CD8-positive, alpha-beta T cell (primary cell): ENCODE measurements at regions of chr2 and their contacts with region 1.

Region 1: GRCh38 chr2:158091647-158092046 is 10.0 kb upstream of the UPP2 start:
- DNase-seq: no peak
- ATAC-seq: no peak
- H3K4me3 ChIP-seq: no peak overlapping the region
- H3K4me3 Mint-ChIP-seq: no peak overlapping the region
- H3K27ac ChIP-seq: no peak overlapping the region
- H3K27ac Mint-ChIP-seq: no peak overlapping the region
- H3K4me1 ChIP-seq: no peaks in the 10 kb centered on the region
- H3K4me1 Mint-ChIP-seq: no peaks in the 10 kb centered on the region
- H3K27me3 ChIP-seq: no peaks in the 10 kb centered on the region
- H3K27me3 Mint-ChIP-seq: peaks cover 24% of the 10 kb centered on the region
- CTCF ChIP-seq: no peak

Region 2: GRCh38 chr2:158129037-158129436 is 37.4 kb after region 1 on chr2:
- CTCF ChIA-PET with region 1: no interaction called
- POLR2A ChIA-PET with region 1: no interaction called
- intact Hi-C with region 1: loop called in 1 of 2 experiments (anchors 1 kb)
- DNase-seq: no peak
- ATAC-seq: no peak
- H3K4me3 ChIP-seq: no peak overlapping the region
- H3K4me3 Mint-ChIP-seq: no peak overlapping the region
- H3K27ac ChIP-seq: no peak overlapping the region
- H3K27ac Mint-ChIP-seq: no peak overlapping the region
- H3K4me1 ChIP-seq: no peaks in the 10 kb centered on the region
- H3K4me1 Mint-ChIP-seq: no peaks in the 10 kb centered on the region
- H3K27me3 ChIP-seq: no peaks in the 10 kb centered on the region
- H3K27me3 Mint-ChIP-seq: peaks cover 2% of the 10 kb centered on the region
- CTCF ChIP-seq: no peak